ENCODE measurements at regions of chr2 and their contacts with region 1.

Region 1: GRCh38 chr2:162123806-162124758 is 28.0 kb downstream of the GCG start:
- DNase-seq: no peak
- H3K4me3 ChIP-seq: no peak overlapping the region
- H3K27ac ChIP-seq: no peak overlapping the region
- H3K4me1 ChIP-seq: no peaks in the 10 kb centered on the region
- H3K27me3 ChIP-seq: no peaks in the 10 kb centered on the region
- CTCF ChIP-seq: peak; percentile 75 to 89 (median 80)
- EP300 ChIP-seq: no peak
- POLR2A ChIP-seq: no peak

Region 2: DNA sequence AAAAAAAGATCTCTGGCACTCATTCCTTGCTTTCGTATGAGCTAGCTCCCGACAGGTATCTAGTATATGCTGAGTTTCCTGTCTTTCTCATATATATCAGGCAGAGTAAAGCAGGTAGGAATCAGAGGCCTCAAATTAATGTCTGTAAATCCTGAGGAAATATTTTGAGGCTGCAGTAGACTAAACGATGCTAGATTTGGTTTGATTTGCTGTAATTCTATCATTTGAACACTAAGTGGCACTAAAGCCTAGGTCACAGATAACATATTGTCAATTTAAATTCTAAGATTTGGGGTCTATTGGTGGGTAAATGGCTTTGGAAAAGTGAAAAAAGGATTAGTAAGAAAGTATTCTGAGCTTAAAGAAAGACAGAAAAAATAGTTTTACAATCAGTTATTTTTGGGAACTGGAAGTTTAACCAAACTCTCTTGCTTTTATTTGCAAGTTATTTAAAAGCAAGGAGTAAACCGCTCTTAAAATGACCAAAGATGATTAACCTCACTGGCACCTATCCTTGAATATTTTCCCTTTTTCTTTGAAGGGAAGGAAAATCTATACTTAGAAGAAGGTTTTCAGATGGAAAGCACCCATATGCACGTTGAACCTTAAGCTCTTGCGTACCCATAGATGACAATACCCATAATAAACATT is 537.4 kb before region 1 on chr2:
- in situ Hi-C with region 1: loop called in 3 of 4 experiments (anchors 10 to 25 kb)
- intact Hi-C with region 1: no loop called
- DNase-seq: no peak
- H3K4me3 ChIP-seq: no peak overlapping the region
- H3K27ac ChIP-seq: no peak overlapping the region
- H3K4me1 ChIP-seq: peaks cover 0 to 6% (median 0%) of the 10 kb centered on the region in 4 donors
- H3K27me3 ChIP-seq: no peaks in the 10 kb centered on the region
- CTCF ChIP-seq: peak; percentile 57 to 69 (median 61)
- EP300 ChIP-seq: no peak
- POLR2A ChIP-seq: no peak

Region 3: DNA sequence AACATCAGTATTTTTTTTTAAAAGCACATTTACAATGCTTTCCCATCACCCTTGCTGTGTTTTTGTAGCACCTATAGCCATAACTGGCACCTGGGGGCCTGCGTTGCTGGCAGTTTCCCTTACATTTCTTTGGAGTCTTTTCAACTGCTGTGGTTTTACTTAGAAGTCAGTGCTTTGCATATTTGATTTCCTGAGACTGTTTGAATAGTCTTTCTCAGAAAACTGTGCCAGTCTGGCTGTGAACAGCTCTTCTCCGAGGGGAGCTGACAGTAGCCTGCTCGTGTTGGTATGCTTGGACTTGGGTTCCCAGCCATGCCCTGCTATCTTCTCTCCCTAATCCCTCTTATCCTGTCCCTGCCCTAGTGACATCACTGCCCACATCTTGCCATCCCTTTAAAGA is 131.6 kb before region 1 on chr2:
- in situ Hi-C with region 1: no loop called
- intact Hi-C with region 1: loop called (anchors 5 kb)
- DNase-seq: no peak
- H3K4me3 ChIP-seq: no peak overlapping the region
- H3K27ac ChIP-seq: no peak overlapping the region
- H3K4me1 ChIP-seq: peaks cover 0 to 6% (median 0%) of the 10 kb centered on the region in 4 donors
- H3K27me3 ChIP-seq: no peaks in the 10 kb centered on the region
- CTCF ChIP-seq: no peak
- EP300 ChIP-seq: no peak
- POLR2A ChIP-seq: no peak

Region 4: DNA sequence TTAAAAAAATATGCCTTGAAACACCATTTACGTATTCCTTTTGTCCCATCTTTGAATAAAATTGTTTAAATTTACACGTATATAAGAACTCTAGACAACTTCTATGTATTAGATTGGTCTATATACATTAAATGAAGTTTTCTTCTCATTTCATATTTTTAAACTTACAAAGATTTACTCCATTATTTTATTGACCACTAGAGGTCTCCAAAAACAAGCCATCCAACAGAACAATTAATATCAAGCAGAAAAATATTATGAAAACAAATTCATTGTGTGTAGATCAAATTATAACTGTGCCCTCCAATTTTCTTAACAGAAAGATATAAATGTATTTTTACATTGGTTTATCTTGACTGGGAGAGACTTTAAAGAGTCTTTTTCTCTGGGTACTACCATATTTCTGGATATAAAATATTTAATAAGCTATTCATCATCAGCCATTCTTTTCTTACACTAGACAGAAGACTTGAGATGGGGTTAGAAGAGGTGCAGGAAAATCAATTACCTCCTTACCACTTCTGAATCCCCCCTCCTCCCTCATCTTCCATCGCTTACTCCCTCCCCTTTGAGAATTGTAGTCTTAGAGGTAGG is 116.5 kb before region 1 on chr2:
- in situ Hi-C with region 1: loop called in 3 of 4 experiments (anchors 5 to 10 kb)
- intact Hi-C with region 1: loop called (anchors 5 kb)
- DNase-seq: no peak
- H3K4me3 ChIP-seq: no peak overlapping the region
- H3K27ac ChIP-seq: no peak overlapping the region
- H3K4me1 ChIP-seq: peaks cover 0 to 8% (median 3%) of the 10 kb centered on the region in 4 donors
- H3K27me3 ChIP-seq: no peaks in the 10 kb centered on the region
- CTCF ChIP-seq: peak; percentile 56 to 80 (median 66)
- EP300 ChIP-seq: no peak
- POLR2A ChIP-seq: no peak

Region 5: GRCh38 chr2:162013514-162014475 is 110.3 kb before region 1 on chr2:
- in situ Hi-C with region 1: loop called in 2 of 4 experiments (anchors 10 kb)
- intact Hi-C with region 1: loop called (anchors 5 kb)
- DNase-seq: no peak
- H3K4me3 ChIP-seq: no peak overlapping the region
- H3K27ac ChIP-seq: peak overlapping the region in 3 of 4 donors; percentile 4 to 31 (median 7)
- H3K4me1 ChIP-seq: peaks cover 0 to 14% (median 8%) of the 10 kb centered on the region in 4 donors
- H3K27me3 ChIP-seq: no peaks in the 10 kb centered on the region
- CTCF ChIP-seq: no peak
- EP300 ChIP-seq: no peak
- POLR2A ChIP-seq: no peak

Region 6: GRCh38 chr2:162333968-162334367 is 209.9 kb after region 1 on chr2:
- in situ Hi-C with region 1: no loop called
- intact Hi-C with region 1: no loop called
- DNase-seq: peak; percentile 51
- H3K4me3 ChIP-seq: no peak overlapping the region
- H3K27ac ChIP-seq: no peak overlapping the region
- H3K4me1 ChIP-seq: no peaks in the 10 kb centered on the region
- H3K27me3 ChIP-seq: no peaks in the 10 kb centered on the region
- CTCF ChIP-seq: peak in 4 of 5 experiments; percentile 22 to 41 (median 31)
- EP300 ChIP-seq: no peak
- POLR2A ChIP-seq: no peak

Measured in transverse colon (tissue), 4 donors.